Mammary epithelial cell (primary cell): ENCODE measurements at regions of chr16 and their contacts with region 1.

Region 1: DNA sequence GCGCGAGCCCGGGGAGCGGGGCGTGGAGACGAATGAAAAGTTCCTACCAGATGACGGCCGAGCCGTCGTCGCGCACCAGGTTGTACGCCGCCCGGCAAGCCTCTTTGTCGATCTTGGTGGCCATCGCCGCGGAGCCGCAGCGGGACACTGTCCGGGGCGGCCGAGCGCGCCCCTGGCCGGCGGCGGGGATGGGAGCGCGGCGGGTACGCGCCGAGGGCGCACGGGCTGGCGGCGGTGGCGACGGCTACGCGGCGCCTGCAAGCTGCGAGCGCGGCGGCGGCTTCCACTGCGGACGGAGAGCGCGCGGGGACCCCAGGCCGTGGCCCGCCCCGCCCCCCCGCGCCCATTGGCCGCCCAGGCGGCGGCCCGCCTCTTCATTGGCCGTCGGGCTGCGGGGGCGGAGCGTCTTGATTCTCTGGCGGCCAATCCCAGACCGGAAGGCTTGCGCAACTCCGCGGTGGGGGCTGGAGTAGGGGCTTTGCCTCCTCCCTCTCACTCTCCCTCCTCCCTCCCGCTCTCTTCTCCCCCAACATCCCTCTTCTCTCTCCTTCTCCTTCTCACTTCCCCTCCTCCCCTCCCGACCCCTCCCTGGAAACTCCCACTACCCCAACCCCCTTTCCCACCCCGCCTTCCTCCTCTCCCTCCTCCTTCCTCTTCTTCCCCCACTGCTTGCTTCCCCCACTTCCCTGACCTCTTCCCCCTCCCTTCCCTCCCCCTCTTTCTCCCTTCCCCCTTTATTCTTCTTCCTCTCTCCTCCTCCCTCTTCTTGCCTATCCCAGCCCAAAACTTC is at the start of gene COTL1:
- DNase-seq: peak; percentile 97
- H3K4me3 ChIP-seq: peak within 1 kb of the TSS; percentile 75 to 93 (median 91)
- H3K27ac ChIP-seq: peak within 1 kb of the TSS; percentile 77
- H3K4me1 ChIP-seq: peaks cover 36% of the 10 kb centered on the region
- H3K27me3 ChIP-seq: no peaks in the 10 kb centered on the region
- CTCF ChIP-seq: no peak
- total RNA-seq, gene COTL1: 79.2 to 202 TPM

Region 2: GRCh38 chr16:84423416-84423837 is 194.6 kb before region 1 on chr16:
- CTCF ChIA-PET with region 1: no interaction called
- dilution Hi-C with region 1: no loop called
- in situ Hi-C with region 1: no loop called
- intact Hi-C with region 1: no loop called
- DNase-seq: peak; percentile 48
- H3K4me3 ChIP-seq: no peak overlapping the region
- H3K27ac ChIP-seq: no peak overlapping the region
- H3K4me1 ChIP-seq: no peaks in the 10 kb centered on the region
- H3K27me3 ChIP-seq: no peaks in the 10 kb centered on the region
- CTCF ChIP-seq: no peak

Region 3: DNA sequence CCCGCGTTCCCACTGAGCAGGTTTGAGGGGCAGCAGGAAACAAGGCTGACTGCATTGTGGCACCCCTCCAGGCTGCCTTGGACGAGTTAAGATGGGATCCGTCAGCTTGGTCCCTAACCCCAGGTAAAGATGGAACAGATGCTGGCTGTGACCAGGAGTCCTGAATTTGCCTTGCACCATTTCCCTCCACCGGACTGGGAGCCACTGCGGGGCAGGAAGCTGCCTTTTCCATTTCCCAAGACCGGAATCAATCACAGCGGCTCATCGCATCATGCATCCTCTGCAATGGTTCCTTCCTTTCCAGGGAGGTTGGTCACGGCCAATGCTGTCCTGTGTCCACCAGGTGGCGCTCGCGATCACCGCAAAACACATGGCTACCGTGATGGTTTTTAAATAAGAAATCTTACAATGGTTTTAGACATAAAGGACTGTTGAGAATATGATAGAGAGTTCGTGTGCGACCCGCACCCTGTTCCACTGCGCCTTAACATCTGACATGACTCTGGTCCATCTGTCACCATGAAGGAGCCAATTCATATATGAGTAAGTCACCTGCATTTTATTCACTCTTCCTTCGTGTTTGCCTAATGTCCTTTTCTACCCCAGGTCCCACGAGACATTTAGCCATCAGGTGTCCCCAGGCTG is 106.7 kb before region 1 on chr16:
- CTCF ChIA-PET with region 1: interaction called, 13 read pairs
- dilution Hi-C with region 1: no loop called
- in situ Hi-C with region 1: loop called (anchors 5 kb)
- intact Hi-C with region 1: loop called (anchors 1 kb)
- DNase-seq: peak; percentile 72
- H3K4me3 ChIP-seq: no peak overlapping the region
- H3K27ac ChIP-seq: no peak overlapping the region
- H3K4me1 ChIP-seq: peaks cover 4% of the 10 kb centered on the region
- H3K27me3 ChIP-seq: no peaks in the 10 kb centered on the region
- CTCF ChIP-seq: peak; percentile 90 to 94

Region 4: DNA sequence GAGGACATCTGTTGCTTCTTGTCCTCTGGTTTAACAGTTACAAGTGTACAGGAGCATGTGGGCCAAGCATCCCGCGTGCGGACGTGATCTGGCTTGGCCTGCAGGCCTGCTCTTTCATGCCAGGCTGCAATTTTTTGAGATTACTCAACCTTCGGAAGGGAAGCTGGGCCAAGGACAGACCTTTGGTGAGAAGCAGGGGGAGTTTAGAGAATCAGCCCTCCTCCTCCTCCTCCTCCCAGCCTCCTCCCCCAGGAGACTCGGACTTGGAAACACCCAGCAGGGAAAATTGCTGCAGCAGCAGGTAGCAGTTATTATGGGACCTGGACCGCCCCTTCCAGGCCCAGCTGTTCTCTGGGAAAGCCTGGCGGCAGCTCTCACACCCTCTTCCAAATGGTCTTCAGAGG is 25.2 kb after region 1 on chr16:
- CTCF ChIA-PET with region 1: no interaction called
- dilution Hi-C with region 1: no loop called
- in situ Hi-C with region 1: no loop called
- intact Hi-C with region 1: loop called (anchors 1 kb)
- DNase-seq: peak; percentile 88
- H3K4me3 ChIP-seq: peak overlapping the region in 1 of 3 experiments; percentile 27
- H3K27ac ChIP-seq: peak overlapping the region; percentile 44
- H3K4me1 ChIP-seq: peaks cover 44% of the 10 kb centered on the region
- H3K27me3 ChIP-seq: no peaks in the 10 kb centered on the region
- CTCF ChIP-seq: no peak

Region 5: DNA sequence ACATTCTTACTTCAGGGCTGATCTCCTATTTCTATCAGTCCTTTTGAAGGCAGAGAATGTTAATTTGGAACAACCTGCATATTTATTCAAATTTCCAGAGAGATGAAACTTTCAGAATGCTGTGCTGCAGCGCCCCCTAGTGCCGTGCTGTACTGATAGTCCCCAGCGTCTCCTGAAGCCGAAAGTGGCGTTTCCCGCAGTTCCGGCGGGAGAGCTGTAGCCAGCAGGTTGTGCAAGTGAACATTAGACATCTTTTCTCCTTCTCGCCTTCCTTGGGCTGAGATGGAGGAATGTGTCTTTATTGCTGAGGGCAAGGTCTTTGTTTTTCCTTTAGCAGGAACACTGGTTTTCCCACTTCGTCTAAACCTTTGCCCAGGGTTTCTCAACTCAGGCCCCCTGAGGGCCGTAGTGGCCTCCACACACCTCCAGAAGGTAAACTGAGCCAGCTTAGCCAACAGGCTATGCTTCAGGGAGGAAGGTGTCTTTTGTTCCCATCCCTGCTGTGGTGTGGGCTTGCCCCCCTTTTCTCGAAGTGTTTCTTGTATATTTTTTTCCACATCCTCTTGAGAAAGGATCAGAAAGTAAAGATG is 108.2 kb after region 1 on chr16:
- CTCF ChIA-PET with region 1: interaction called, 3 read pairs
- dilution Hi-C with region 1: no loop called
- in situ Hi-C with region 1: loop called in 1 of 2 experiments (anchors 5 kb)
- intact Hi-C with region 1: loop called (anchors 1 kb)
- DNase-seq: peak; percentile 70
- H3K4me3 ChIP-seq: peak overlapping the region in 1 of 3 experiments; percentile 3
- H3K27ac ChIP-seq: peak overlapping the region; percentile 50
- H3K4me1 ChIP-seq: peaks cover 31% of the 10 kb centered on the region
- H3K27me3 ChIP-seq: no peaks in the 10 kb centered on the region
- CTCF ChIP-seq: peak; percentile 91 to 92

Region 6: DNA sequence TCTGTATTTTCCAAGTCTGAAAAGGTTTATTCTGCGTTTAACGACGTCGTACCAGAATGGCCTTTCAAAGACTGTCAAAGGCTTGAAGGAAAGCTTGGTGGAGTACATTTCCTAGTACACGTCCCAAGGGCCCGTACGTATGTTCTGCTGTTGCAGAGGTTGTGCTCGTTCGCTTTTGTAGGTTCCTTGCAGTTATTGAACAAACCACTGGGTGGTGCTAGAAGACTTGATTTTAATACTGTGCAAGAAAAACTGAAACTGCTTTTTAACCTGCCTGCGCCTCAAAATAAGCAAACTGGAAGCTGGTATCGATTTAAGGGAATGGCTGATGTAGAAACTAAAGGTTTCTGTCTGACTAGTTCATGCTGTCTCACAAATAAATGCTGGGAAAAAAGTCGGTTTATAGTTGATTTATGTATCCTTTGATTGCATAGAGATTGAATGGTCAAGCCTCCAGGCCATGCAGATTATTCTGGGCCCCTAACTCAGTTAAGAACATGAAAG is 136.4 kb after region 1 on chr16:
- CTCF ChIA-PET with region 1: no interaction called
- dilution Hi-C with region 1: no loop called
- in situ Hi-C with region 1: no loop called
- intact Hi-C with region 1: no loop called
- DNase-seq: peak; percentile 84
- H3K4me3 ChIP-seq: peak overlapping the region in 2 of 3 experiments; percentile 6 to 34
- H3K27ac ChIP-seq: peak overlapping the region; percentile 85
- H3K4me1 ChIP-seq: peaks cover 35% of the 10 kb centered on the region
- H3K27me3 ChIP-seq: no peaks in the 10 kb centered on the region
- CTCF ChIP-seq: peak; percentile 77 to 80

Region 7: GRCh38 chr16:84952335-84953189 is 334.6 kb after region 1 on chr16:
- CTCF ChIA-PET with region 1: no interaction called
- dilution Hi-C with region 1: no loop called
- in situ Hi-C with region 1: no loop called
- intact Hi-C with region 1: loop called (anchors 1 kb)
- DNase-seq: peak; percentile 55
- H3K4me3 ChIP-seq: no peak overlapping the region
- H3K27ac ChIP-seq: no peak overlapping the region
- H3K4me1 ChIP-seq: peaks cover 4% of the 10 kb centered on the region
- H3K27me3 ChIP-seq: no peaks in the 10 kb centered on the region
- CTCF ChIP-seq: peak; percentile 81 to 89